Activated B cell treated with CpG ODN at 0.5 μM for 24 hours (primary cell): ENCODE measurements at regions of chr5 and their contacts with region 1.

Region 1: DNA sequence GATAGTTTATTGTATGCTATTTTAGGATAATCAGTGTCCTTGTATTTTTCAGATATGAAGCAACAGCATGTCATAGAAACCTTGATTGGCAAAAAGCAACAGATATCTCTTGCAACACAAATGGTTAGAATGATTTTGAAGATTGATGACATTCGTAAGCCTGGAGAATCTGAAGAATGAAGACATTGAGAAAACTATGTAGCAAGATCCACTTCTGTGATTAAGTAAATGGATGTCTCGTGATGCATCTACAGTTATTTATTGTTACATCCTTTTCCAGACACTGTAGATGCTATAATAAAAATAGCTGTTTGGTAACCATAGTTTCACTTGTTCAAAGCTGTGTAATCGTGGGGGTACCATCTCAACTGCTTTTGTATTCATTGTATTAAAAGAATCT is 14.5 kb downstream of the CCT5 start:
- DNase-seq: no peak
- ATAC-seq: no peak
- H3K4me3 Mint-ChIP-seq: no peak overlapping the region
- H3K27ac Mint-ChIP-seq: no peak overlapping the region
- H3K4me1 Mint-ChIP-seq: no peaks in the 10 kb centered on the region
- H3K27me3 Mint-ChIP-seq: no peaks in the 10 kb centered on the region
- CTCF ChIP-seq: no peak

Region 2: DNA sequence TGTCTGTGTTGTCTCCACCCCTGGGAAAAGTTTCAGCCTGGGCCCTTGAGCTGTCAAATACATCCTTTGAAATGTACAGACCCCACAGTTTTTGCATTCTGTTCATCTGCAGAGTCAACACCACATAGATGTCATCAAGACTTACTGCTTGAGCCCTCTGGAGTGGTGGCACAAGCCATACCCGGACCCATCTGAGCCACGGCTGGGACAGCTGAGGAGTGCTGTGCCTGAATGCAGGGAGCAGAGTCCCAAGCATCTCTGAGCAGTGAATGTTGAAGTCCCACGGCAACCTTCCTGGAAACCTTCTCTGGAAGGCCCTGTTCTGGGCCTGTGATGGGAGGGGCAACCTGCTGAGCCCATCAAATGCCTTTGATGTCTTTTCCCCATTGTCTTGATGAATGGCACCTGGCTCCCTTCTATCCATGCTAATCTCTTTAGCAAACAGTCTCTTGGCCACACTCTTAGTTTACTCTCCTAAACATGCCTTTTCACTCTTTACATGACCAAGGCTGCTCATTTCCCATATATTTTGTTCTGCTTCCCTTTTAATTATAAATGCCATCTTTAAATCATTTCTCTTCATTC is 107.4 kb before region 1 on chr5:
- CTCF ChIA-PET with region 1: no interaction called
- POLR2A ChIA-PET with region 1: no interaction called
- intact Hi-C with region 1: no loop called
- DNase-seq: no peak
- ATAC-seq: no peak
- H3K4me3 Mint-ChIP-seq: no peak overlapping the region
- H3K27ac Mint-ChIP-seq: no peak overlapping the region
- H3K4me1 Mint-ChIP-seq: no peaks in the 10 kb centered on the region
- H3K27me3 Mint-ChIP-seq: peaks cover 5% of the 10 kb centered on the region
- CTCF ChIP-seq: no peak

Region 3: GRCh38 chr5:10249948-10250803 is 14.4 kb before region 1 on chr5 and contains the start of gene CCT5:
- CTCF ChIA-PET with region 1: no interaction called
- POLR2A ChIA-PET with region 1: interaction called, 11 read pairs
- intact Hi-C with region 1: no loop called
- DNase-seq: peak; percentile 80
- ATAC-seq: peak; percentile 80
- H3K4me3 Mint-ChIP-seq: peak within 1 kb of the TSS; percentile 98
- H3K27ac Mint-ChIP-seq: peak within 1 kb of the TSS; percentile 99
- H3K4me1 Mint-ChIP-seq: peaks cover 52% of the 10 kb centered on the region
- H3K27me3 Mint-ChIP-seq: no peaks in the 10 kb centered on the region
- CTCF ChIP-seq: no peak
- total RNA-seq, gene CCT5: 203 and 213 TPM in 2 replicates